K562 (cell line): ENCODE measurements at regions of chr6 and their contacts with region 1.

Region 1: GRCh38 chr6:61649845-61650244 is 636.2 kb downstream of the KHDRBS2 start:
- DNase-seq: no peak
- ATAC-seq: no peak
- H3K4me3 ChIP-seq: no peak overlapping the region
- H3K27ac ChIP-seq: no peak overlapping the region
- H3K4me1 ChIP-seq: no peaks in the 10 kb centered on the region
- H3K27me3 ChIP-seq: no peaks in the 10 kb centered on the region
- CTCF ChIP-seq: no peak
- EP300 ChIP-seq: no peak
- POLR2A ChIP-seq: no peak
- RAD21 ChIP-seq: no peak

Region 2: GRCh38 chr6:61562098-61562497 is 87.7 kb before region 1 on chr6:
- CTCF ChIA-PET with region 1: no interaction called
- POLR2A ChIA-PET with region 1: no interaction called
- in situ Hi-C with region 1: no loop called
- intact Hi-C with region 1: loop called (anchors 10 kb)
- DNase-seq: no peak
- ATAC-seq: no peak
- H3K4me3 ChIP-seq: no peak overlapping the region
- H3K27ac ChIP-seq: no peak overlapping the region
- H3K4me1 ChIP-seq: no peaks in the 10 kb centered on the region
- H3K27me3 ChIP-seq: no peaks in the 10 kb centered on the region
- CTCF ChIP-seq: no peak
- EP300 ChIP-seq: no peak
- POLR2A ChIP-seq: no peak
- RAD21 ChIP-seq: no peak

Region 3: DNA sequence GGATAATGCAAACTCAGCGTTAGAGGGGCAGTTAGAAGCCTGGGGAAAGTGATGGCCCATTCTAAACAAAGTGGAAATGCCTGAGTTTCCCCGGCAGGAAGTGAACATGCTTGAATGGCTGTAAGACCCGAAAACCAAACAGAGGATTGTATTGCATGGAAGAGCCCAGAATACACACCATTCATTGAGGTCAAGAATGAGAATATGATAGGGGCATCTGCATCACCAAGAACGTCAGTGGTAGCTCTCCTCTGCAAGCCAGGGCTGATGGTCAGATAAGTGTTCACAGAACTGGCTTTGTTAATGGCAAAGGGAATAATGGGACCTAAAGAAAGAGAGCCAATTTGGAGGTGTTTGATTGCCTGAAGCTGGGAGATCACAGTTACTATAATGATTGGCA is 27.2 kb before region 1 on chr6:
- CTCF ChIA-PET with region 1: no interaction called
- POLR2A ChIA-PET with region 1: no interaction called
- in situ Hi-C with region 1: no loop called
- intact Hi-C with region 1: no loop called
- DNase-seq: no peak
- ATAC-seq: no peak
- H3K4me3 ChIP-seq: no peak overlapping the region
- H3K27ac ChIP-seq: no peak overlapping the region
- H3K4me1 ChIP-seq: no peaks in the 10 kb centered on the region
- H3K27me3 ChIP-seq: no peaks in the 10 kb centered on the region
- CTCF ChIP-seq: no peak
- EP300 ChIP-seq: no peak
- POLR2A ChIP-seq: no peak
- RAD21 ChIP-seq: no peak

Region 4: GRCh38 chr6:61989616-61990015 is 339.8 kb after region 1 on chr6:
- CTCF ChIA-PET with region 1: no interaction called
- POLR2A ChIA-PET with region 1: no interaction called
- in situ Hi-C with region 1: no loop called
- intact Hi-C with region 1: no loop called
- DNase-seq: no peak
- ATAC-seq: no peak
- H3K4me3 ChIP-seq: no peak overlapping the region
- H3K27ac ChIP-seq: no peak overlapping the region
- H3K4me1 ChIP-seq: no peaks in the 10 kb centered on the region
- H3K27me3 ChIP-seq: no peaks in the 10 kb centered on the region
- CTCF ChIP-seq: no peak
- EP300 ChIP-seq: no peak
- POLR2A ChIP-seq: no peak
- RAD21 ChIP-seq: no peak